ENCODE measurements at regions of chr9 and their contacts with region 1.

Region 1: DNA sequence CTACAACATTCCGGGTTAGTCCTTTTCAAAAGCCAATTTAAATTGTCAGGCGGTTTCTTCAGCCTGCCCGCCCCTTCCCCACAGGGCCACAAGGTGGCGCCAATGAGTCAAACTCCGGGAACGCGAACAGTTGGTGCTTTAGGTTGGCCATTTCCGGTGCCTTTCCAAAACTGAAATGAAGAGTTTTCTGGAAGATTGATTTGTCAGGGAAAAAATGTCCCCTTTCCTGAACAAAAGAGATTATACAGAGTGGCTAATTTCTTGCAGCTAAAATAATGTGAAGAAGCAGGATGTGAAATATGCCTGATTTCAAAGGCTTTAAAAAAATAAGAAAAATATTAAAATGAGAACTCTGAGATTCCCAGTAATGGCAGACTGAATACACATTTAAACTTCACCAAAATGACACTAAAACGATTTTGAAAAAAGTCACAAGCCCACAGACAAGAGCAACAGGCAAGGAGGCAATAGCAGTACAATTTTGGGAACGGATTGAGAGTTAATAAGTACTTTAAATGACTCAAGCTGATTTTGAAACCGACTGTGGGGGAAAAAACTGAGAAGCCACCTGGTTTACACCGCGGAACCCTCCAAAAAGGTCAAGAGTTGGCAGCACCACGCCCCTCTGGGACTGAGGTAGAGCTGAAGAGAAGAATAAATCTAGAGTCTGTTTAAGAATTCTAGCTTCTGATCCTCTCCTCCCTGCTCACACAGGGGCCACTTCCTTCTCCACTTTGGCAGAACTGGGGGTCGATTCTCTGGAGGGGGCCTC is 45.7 kb downstream of the SLC46A2 start:
- DNase-seq: peak; percentile 29 to 56
- ATAC-seq: peak; percentile 70 to 87
- H3K4me3 ChIP-seq: no peak overlapping the region
- H3K27ac ChIP-seq: no peak overlapping the region
- H3K4me1 ChIP-seq: no peaks in the 10 kb centered on the region
- H3K27me3 ChIP-seq: no peaks in the 10 kb centered on the region
- CTCF ChIP-seq: peak; percentile 83 to 98 (median 87)
- POLR2A ChIP-seq: no peak

Region 2: GRCh38 chr9:112629671-112630485 is 215.1 kb before region 1 on chr9:
- in situ Hi-C with region 1: no loop called
- intact Hi-C with region 1: no loop called
- DNase-seq: no peak
- ATAC-seq: no peak
- H3K4me3 ChIP-seq: no peak overlapping the region
- H3K27ac ChIP-seq: no peak overlapping the region
- H3K4me1 ChIP-seq: no peaks in the 10 kb centered on the region
- H3K27me3 ChIP-seq: no peaks in the 10 kb centered on the region
- CTCF ChIP-seq: no peak
- POLR2A ChIP-seq: no peak

Region 3: GRCh38 chr9:112898872-112899311 is 53.9 kb after region 1 on chr9:
- in situ Hi-C with region 1: loop called in 2 of 4 experiments (anchors 5 to 10 kb)
- intact Hi-C with region 1: loop called (anchors 1 kb)
- DNase-seq: no peak
- ATAC-seq: no peak
- H3K4me3 ChIP-seq: no peak overlapping the region
- H3K27ac ChIP-seq: no peak overlapping the region
- H3K4me1 ChIP-seq: no peaks in the 10 kb centered on the region
- H3K27me3 ChIP-seq: no peaks in the 10 kb centered on the region
- CTCF ChIP-seq: no peak
- POLR2A ChIP-seq: no peak

Region 4: GRCh38 chr9:112905084-112905483 is 60.1 kb after region 1 on chr9:
- in situ Hi-C with region 1: loop called in 2 of 4 experiments (anchors 5 to 10 kb)
- intact Hi-C with region 1: loop called (anchors 1 kb)
- DNase-seq: no peak
- ATAC-seq: no peak
- H3K4me3 ChIP-seq: no peak overlapping the region
- H3K27ac ChIP-seq: no peak overlapping the region
- H3K4me1 ChIP-seq: no peaks in the 10 kb centered on the region
- H3K27me3 ChIP-seq: no peaks in the 10 kb centered on the region
- CTCF ChIP-seq: no peak
- POLR2A ChIP-seq: no peak

Measured in gastrocnemius medialis (tissue), 4 donors.